ENCODE measurements at regions of chr5 and their contacts with region 1.

Region 1: GRCh38 chr5:134586866-134587524 is 45.6 kb downstream of the SAR1B start:
- DNase-seq: peak; percentile 85
- H3K4me3 Mint-ChIP-seq: no peak overlapping the region
- H3K27ac Mint-ChIP-seq: peak overlapping the region; percentile 14
- H3K4me1 Mint-ChIP-seq: peaks cover 19% of the 10 kb centered on the region
- H3K27me3 Mint-ChIP-seq: no peaks in the 10 kb centered on the region

Region 2: DNA sequence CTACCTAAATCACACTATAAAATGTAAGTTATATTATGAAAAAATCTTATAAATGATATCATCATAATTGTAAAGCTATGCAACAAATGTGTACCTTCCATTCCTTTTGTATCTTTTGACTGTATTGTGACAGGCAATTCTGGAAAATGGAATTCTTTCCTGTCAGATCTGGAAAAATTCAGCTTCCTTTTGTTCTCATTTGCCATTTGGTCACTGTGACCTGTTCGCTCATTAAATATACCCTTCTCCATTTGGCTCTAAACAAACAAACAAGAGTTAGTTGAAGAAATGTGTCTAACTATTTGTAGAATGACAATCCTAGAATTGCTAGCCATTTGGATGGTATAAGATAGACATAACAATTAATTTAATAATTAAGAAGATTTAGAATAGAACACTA is 282.7 kb before region 1 on chr5:
- CTCF ChIA-PET with region 1: interaction called, 55 read pairs
- POLR2A ChIA-PET with region 1: interaction called, 3 read pairs
- DNase-seq: no peak
- H3K4me3 Mint-ChIP-seq: no peak overlapping the region
- H3K27ac Mint-ChIP-seq: no peak overlapping the region
- H3K4me1 Mint-ChIP-seq: peaks cover 7% of the 10 kb centered on the region
- H3K27me3 Mint-ChIP-seq: peaks cover 2% of the 10 kb centered on the region

Region 3: DNA sequence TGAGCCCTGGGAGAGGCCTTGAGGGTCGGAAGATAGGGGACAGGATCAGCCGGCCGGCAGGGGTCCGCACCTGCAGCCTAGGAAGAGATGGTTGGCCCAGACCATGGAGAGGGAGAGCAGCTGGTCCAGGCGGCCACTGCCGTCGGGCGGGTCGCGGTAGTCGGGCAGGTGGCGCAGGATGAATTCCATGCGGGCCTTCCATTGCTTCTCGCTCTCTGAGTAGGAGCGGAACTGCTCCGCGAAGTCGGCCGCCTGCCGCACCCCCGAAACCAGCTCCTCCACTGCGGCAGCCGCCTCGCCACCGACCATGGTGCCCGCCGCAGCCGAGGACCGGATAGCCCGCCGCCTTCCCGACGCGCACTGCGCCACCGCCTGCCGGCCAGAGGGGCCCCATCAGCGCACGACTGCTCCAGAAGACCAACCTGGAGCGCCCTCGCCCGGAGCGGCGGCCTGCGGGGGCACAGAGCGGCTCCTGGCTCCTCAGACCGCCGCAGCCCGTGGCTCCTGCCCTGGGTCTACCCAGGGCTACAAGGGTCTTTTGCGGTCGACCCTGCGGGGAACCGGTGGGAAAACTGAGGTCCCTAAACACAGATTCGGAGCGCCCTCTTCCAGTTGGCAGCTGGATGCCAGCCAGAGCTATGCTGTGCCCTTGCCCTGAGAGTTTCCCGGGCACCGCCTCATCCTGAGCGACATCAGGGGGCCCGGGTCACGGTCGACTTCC is 175.3 kb before region 1 on chr5 and contains the start of gene CDKN2AIPNL:
- CTCF ChIA-PET with region 1: interaction called, 38 read pairs
- POLR2A ChIA-PET with region 1: interaction called, 5 read pairs
- DNase-seq: peak; percentile 91
- H3K4me3 Mint-ChIP-seq: peak within 1 kb of the TSS; percentile 96
- H3K27ac Mint-ChIP-seq: peak within 1 kb of the TSS; percentile 84
- H3K4me1 Mint-ChIP-seq: peaks cover 36% of the 10 kb centered on the region
- H3K27me3 Mint-ChIP-seq: no peaks in the 10 kb centered on the region
- total RNA-seq, gene CDKN2AIPNL: 23.4 to 23.5 TPM

Region 4: DNA sequence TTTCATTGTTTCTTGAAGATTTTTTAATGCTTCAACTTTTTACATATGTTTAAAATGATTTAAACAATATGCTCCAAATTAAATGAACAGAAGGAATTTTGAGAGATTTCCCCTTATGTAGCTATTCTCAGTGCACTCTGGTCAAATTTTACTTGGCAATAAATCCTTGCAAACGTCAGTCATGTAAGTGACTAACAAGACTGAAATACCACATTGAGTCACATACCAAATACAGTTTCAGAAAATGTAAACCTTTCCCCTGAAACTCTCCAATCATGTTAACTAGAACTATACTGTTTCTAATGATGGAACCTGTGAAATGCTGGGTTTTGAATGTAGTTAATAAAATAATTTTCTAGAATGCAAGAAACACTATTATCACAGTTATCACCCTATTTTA is 16.1 kb after region 1 on chr5:
- CTCF ChIA-PET with region 1: interaction called, 30 read pairs
- POLR2A ChIA-PET with region 1: interaction called, 6 read pairs
- DNase-seq: no peak
- H3K4me3 Mint-ChIP-seq: no peak overlapping the region
- H3K27ac Mint-ChIP-seq: no peak overlapping the region
- H3K4me1 Mint-ChIP-seq: peaks cover 36% of the 10 kb centered on the region
- H3K27me3 Mint-ChIP-seq: no peaks in the 10 kb centered on the region

Region 5: GRCh38 chr5:134648425-134649162 is 61.6 kb after region 1 on chr5 and contains the start of gene SEC24A:
- CTCF ChIA-PET with region 1: interaction called, 15 read pairs
- POLR2A ChIA-PET with region 1: interaction called, 3 read pairs
- DNase-seq: peak; percentile 92
- H3K4me3 Mint-ChIP-seq: peak within 1 kb of the TSS; percentile 86
- H3K27ac Mint-ChIP-seq: peak within 1 kb of the TSS; percentile 94
- H3K4me1 Mint-ChIP-seq: peaks cover 28% of the 10 kb centered on the region
- H3K27me3 Mint-ChIP-seq: no peaks in the 10 kb centered on the region
- total RNA-seq, gene SEC24A: 29.3 to 29.6 TPM

Region 6: DNA sequence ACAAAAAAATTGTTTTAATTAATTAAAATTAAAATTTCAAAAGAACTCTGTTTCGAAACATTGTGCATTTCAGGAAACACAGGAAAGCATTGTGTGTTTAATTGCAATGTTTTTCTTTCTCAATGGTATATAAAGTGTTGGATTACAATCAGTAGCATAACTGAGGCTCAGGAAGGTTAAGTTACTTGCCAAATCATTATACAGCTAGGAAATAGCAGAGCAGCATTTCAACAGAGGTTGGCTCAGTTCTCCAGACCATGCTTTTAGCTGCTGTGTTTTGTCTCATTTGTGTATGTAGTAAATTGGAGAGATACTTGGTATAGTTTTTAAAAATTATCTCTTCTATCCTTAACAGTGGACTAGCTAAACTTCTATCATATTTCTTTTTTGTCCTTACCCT is 121.3 kb after region 1 on chr5:
- CTCF ChIA-PET with region 1: no interaction called
- POLR2A ChIA-PET with region 1: no interaction called
- DNase-seq: no peak
- H3K4me3 Mint-ChIP-seq: no peak overlapping the region
- H3K27ac Mint-ChIP-seq: no peak overlapping the region
- H3K4me1 Mint-ChIP-seq: no peaks in the 10 kb centered on the region
- H3K27me3 Mint-ChIP-seq: no peaks in the 10 kb centered on the region

Region 7: GRCh38 chr5:134794082-134794481 is 207.1 kb after region 1 on chr5:
- CTCF ChIA-PET with region 1: no interaction called
- POLR2A ChIA-PET with region 1: no interaction called
- DNase-seq: no peak
- H3K4me3 Mint-ChIP-seq: no peak overlapping the region
- H3K27ac Mint-ChIP-seq: no peak overlapping the region
- H3K4me1 Mint-ChIP-seq: no peaks in the 10 kb centered on the region
- H3K27me3 Mint-ChIP-seq: no peaks in the 10 kb centered on the region

Measured in activated CD4-positive, alpha-beta memory T cell treated with anti-CD3 and anti-CD28 coated beads, Interleukin-2, amount 10 ng/mL, durations not matched to agents 7 days and 5 days (primary cell).